ENCODE measurements at regions of chr12 and their contacts with region 1.

Region 1: GRCh38 chr12:58139894-58140293 is 198.5 kb downstream of the ATP23 start:
- DNase-seq: no peak
- H3K4me3 ChIP-seq: no peak overlapping the region
- H3K27ac ChIP-seq: no peak overlapping the region
- H3K4me1 ChIP-seq: no peaks in the 10 kb centered on the region
- H3K27me3 ChIP-seq: no peaks in the 10 kb centered on the region
- CTCF ChIP-seq: no peak

Region 2: DNA sequence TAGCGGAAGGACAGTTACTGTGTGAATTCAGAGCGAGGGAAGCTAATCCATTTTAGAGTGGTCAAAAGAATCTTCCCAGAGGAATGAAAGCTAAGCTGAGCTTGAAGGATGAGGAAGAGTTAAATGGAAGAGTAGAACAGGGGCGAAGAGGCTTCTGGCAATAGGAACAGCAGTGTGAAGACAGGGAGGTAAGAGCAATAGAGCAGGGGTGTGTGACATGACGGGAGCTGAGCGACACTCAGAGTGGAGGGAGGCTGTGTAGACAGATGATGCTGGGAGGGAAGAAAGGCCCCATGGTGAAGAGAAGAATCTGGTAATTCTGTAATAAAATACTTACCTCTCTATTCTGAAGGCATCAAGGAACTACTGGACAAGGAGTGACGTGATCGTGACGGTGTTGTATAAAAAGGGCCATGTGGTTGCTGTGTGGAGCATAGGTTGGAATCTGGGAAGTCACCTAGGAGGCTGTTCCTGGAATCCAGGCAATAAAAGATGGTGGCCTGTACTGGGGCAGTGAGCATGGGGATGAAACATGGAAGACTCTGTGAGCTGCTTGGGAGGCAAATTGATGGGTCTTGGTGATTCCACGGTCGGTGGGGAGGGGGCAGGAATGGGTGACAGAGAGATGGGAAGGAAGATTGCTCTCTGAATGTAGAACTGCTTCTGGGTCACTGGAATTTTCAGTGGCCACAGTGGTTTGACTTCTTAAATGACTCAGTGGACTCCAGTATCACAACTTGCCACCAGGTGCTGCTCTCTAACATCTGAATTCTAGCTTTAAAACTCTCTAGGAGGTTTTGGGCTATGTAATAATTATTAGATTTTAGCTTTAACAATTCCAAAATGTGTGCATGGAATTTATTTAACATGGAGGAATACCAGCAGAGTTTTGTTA is 34.4 kb before region 1 on chr12:
- CTCF ChIA-PET with region 1: no interaction called
- dilution Hi-C with region 1: loop called (anchors 5 kb)
- in situ Hi-C with region 1: no loop called
- intact Hi-C with region 1: no loop called
- DNase-seq: peak; percentile 3
- H3K4me3 ChIP-seq: no peak overlapping the region
- H3K27ac ChIP-seq: no peak overlapping the region
- H3K4me1 ChIP-seq: no peaks in the 10 kb centered on the region
- H3K27me3 ChIP-seq: no peaks in the 10 kb centered on the region
- CTCF ChIP-seq: peak; percentile 38 to 60

Region 3: DNA sequence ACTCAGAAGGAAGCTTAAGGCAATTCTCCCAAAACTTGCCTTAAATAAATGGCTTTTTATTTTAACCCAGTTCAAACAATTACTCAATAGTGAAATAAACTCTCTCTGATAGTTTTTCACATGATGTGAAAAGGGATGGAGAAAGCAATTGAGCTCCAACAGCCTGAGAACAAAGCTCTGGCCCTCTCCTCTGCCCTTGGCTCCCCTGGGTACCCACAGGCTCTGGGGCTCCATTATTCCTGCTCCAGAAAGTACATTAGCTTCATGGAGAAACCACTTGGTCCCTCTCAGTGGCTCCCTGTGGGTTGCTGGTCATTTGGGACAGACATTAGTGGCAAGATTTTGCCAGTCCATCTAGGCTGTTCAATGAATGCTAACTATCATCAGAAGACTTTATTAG is 44.3 kb after region 1 on chr12:
- CTCF ChIA-PET with region 1: no interaction called
- dilution Hi-C with region 1: loop called (anchors 5 kb)
- in situ Hi-C with region 1: no loop called
- intact Hi-C with region 1: no loop called
- DNase-seq: no peak
- H3K4me3 ChIP-seq: no peak overlapping the region
- H3K27ac ChIP-seq: no peak overlapping the region
- H3K4me1 ChIP-seq: no peaks in the 10 kb centered on the region
- H3K27me3 ChIP-seq: no peaks in the 10 kb centered on the region
- CTCF ChIP-seq: no peak